ENCODE measurements at regions of chr1 and their contacts with region 1.

Region 1: DNA sequence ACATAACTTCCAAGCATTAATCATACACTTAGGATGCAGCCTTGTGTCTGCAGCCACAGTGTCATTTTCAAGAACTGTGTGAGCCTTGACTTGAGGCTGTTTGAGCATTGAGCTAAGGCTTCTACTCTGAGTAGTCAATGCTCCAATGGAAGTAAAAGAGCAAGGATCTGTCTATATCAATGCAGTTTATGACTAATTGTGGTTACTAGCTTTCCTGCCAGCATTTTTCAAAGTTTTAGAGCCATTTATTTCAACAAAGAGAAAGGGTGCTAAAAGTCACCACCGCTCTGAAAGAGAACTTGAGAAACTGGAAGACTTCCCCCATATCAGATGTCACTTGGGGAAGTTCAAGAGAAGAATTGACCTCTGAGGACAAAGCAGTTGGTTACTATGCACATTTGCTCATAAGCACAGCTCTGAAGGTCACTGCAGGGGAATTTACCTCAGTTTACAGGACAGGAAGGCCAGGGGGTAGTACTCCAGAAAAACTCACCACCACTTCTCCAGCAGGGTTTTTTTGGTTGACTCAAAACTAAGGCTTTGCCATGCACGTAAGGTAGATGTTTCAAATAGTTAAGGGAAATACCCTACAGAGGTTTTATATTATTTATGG is 24.5 kb upstream of the RGS1 start:
- DNase-seq: no peak
- H3K4me3 ChIP-seq: no peak overlapping the region
- H3K27ac ChIP-seq: peak overlapping the region in 1 of 2 donors; percentile 38
- H3K4me1 ChIP-seq: peaks cover 0 to 7% of the 10 kb centered on the region in 2 donors
- H3K27me3 ChIP-seq: no peaks in the 10 kb centered on the region
- CTCF ChIP-seq: no peak

Region 2: DNA sequence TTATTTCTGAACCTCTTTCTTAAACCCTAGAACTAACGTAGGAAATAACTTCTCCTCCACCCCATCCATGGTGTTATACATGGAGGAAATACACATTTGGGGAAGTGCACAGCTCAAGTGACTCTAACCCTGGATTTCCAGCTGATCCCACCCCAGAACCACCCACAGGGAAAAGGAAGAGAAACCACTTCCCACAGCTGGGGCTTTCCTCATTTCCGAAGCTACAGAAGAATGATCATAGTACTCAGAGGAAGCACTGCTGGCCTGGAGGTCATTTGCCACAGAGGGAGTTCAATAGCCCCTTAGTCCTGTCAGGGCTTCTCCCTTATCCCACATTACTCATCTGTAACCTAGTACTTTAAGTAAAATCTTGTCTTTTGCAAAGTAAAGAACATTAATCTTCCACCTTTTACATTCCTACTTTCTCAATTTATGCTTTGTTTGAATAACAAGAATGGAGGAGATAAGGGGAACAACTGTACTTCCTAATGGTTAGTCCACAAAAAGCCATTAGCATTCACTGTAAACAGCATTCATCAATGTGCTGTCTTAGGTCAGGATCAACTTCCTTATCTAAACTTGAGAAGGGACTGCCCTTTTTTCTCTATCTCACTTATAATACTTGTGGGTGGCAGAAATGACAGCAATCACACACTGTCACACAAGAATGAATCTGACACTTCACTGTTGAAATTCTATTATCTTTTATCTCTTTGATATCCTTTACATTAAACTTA is 38.4 kb before region 1 on chr1:
- intact Hi-C with region 1: loop called (anchors 5 kb)
- DNase-seq: peak in 1 of 2 donors; percentile 72
- H3K4me3 ChIP-seq: no peak overlapping the region
- H3K27ac ChIP-seq: peak overlapping the region; percentile 48 to 49
- H3K4me1 ChIP-seq: peaks cover 4 to 11% of the 10 kb centered on the region in 2 donors
- H3K27me3 ChIP-seq: no peaks in the 10 kb centered on the region
- CTCF ChIP-seq: no peak

Region 3: DNA sequence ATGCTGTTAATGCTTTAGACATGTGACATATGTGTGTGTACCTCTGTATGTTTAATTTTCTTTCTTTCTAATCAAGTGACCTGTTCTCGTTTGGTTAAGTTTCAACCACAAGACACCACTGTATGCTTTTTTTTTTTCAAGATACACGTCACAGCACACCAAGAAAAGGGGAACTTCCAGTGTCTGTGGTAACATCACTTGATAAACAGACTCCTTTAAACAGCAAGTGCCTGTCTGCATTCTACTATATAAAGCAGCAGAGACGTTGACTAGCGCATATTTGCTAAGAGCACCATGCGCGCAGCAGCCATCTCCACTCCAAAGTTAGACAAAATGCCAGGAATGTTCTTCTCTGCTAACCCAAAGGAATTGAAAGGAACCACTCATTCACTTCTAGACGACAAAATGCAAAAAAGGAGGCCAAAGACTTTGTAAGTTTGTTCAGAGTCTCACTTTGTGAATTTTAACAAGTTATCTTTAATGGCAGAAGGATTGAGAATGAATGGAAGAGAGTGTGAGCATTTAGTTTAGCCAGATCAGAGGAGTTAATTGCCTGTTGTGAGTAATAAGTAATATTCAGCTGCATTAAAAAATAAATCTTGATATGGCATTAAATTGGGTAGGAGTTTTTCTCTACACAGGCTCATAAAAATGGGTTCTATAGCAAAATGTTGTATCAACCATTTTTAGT is 24.6 kb after region 1 on chr1 and contains the start of gene RGS1:
- intact Hi-C with region 1: no loop called
- DNase-seq: no peak
- H3K4me3 ChIP-seq: peak within 1 kb of the TSS in 1 of 2 donors; percentile 44
- H3K27ac ChIP-seq: no peak within 1 kb of the TSS
- H3K4me1 ChIP-seq: no peaks in the 10 kb centered on the region
- H3K27me3 ChIP-seq: no peaks in the 10 kb centered on the region
- CTCF ChIP-seq: no peak
- total RNA-seq, gene RGS1: 13.0 TPM

Region 4: DNA sequence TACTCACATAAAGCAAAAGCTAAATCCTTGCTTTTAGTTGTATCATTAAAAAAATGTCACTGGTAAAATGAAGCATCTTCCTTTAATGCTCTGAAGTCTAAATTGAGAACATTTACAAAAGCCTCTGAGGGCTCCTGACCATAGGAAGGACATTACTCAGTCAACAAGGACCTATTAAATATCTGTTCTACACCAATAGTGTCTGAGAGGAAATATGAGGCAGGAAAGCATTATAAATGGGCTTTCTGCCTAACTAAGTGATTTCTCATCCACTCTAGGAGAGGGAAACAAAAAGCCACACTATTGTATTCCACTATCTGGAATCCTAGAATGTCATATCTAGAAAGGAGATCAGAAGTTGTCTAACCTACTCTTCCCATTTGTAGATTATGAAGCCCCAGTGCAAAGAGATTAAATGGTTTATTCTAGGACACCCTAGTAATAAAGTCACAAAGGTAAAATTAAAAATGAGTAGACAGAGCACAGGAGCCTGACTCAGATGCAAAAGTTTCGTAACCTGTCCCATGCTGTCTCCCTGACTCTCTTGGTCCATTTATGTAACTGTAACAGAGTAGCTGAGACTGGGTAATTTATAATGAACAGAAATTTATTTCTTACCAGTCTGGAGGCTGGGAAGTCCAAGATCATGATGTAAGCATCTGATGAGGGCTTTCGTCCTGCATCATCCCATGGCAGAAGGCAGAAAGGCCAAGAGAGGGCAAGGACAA is 42.1 kb after region 1 on chr1:
- intact Hi-C with region 1: no loop called
- DNase-seq: no peak
- H3K4me3 ChIP-seq: no peak overlapping the region
- H3K27ac ChIP-seq: no peak overlapping the region
- H3K4me1 ChIP-seq: no peaks in the 10 kb centered on the region
- H3K27me3 ChIP-seq: no peaks in the 10 kb centered on the region
- CTCF ChIP-seq: no peak

Region 5: DNA sequence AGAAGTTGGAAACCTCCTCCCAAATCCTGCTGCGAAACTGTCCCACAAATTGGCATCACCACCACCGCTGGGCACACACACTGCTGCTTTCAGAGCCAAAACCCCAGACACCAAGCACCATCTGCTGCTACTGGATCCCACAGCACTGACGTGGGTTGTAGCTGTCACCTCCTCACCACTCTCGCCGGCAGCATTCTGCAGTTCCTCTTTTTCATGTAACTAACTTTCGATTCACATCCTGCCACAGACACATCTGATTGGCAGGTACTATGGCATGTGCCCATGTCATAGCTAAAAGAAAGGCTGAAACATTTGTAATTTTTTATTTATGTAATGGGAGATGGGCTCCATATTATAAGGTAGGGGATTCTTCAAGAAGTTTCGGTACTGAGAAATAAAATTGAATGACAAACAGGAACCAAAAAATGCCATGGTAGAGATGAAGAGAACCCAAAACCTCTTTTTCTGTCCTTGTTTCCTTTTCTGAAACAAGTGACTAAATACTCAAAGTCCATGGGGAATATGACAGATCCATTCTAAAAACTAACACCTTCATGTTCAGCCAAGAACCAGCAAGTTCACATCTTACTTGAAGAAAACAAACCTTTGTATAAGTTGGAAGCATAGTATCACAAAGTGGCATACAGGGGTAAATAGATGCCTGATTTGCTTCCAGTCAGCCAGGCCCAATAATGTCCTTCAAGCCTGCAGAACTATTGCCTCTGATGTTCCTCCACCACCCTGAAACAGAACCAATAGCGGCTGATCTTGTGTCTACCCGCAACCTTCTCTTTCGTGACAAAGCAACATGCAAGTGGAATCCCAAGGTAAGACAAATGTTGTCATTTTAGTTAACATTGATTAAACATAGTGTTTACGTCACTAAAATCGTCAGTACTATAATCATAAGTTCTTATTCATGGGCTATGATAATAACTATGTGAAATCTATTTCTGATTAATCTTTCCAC is 58.4 kb after region 1 on chr1:
- intact Hi-C with region 1: no loop called
- DNase-seq: peak; percentile 63 to 83
- H3K4me3 ChIP-seq: no peak overlapping the region
- H3K27ac ChIP-seq: no peak overlapping the region
- H3K4me1 ChIP-seq: no peaks in the 10 kb centered on the region
- H3K27me3 ChIP-seq: no peaks in the 10 kb centered on the region
- CTCF ChIP-seq: no peak